ENCODE measurements at regions of chr19 and their contacts with region 1.

Region 1: DNA sequence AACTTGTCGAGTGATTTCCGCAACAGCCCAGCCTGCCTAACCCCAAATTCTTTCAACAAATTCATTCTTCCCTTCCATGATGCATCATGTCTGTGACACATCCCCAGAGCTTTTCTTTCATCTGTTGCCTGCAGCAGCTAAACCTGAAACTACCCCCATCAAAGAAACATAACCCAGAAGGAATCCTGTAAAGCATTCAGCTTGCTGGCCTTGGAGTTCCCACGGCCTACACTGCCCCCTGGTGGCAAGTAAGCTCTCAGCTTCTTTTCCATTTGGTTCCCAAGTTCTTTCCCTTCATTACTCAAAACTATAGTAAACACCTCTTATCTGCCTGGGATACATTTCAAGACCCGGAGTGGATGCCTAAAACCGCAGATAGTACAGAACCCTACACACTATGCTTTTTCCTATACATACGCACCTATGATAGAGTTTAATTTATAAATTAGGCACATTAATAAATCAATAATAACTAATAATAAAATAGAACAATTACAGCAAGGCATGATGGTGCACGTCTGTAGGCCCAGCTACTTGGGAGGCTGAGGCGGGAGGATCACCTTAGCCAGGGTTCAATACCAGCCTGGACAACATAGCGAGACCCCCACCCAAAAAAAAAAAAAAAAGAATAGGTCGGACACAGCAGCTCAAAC is 7.4 kb downstream of the ETHE1 start:
- DNase-seq: peak; percentile 84
- ATAC-seq: peak; percentile 95
- H3K4me3 ChIP-seq: no peak overlapping the region
- H3K27ac ChIP-seq: no peak overlapping the region
- H3K4me1 ChIP-seq: peaks cover 10% of the 10 kb centered on the region
- H3K27me3 ChIP-seq: no peaks in the 10 kb centered on the region
- CTCF ChIP-seq: peak; percentile 93

Region 2: DNA sequence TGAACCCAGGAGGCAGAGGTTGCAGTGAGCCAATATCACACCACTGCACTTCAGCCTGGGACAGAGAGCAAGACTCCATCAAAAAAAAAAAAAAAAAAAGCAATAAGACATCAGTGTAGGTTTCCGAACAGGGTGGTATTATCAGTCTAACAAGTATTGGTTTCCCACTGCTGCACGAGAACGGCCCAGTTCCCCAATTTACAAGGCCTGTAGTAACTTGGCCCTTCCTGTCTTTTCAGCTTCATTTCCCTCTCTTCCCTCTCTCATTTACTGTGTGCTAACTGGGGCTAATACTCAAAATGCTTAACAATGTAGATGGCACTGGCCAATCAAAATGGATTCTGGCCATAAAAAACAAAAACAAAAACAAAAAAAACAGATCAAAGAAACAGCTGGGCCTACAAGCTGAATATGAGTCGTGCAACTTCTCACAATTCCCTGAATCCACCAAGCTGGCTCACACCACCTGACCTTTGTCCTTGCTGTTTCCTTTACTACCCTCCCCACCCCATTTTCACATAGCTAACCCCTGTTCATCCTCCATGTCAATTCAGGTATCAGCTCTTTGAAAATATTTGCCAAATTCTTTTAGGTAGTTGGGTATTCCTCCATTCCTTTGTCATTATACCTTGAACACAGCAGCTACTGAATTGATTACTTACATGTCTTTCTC is 102.5 kb before region 1 on chr19:
- intact Hi-C with region 1: no loop called
- DNase-seq: no peak
- ATAC-seq: peak; percentile 56
- H3K4me3 ChIP-seq: no peak overlapping the region
- H3K27ac ChIP-seq: no peak overlapping the region
- H3K4me1 ChIP-seq: no peaks in the 10 kb centered on the region
- H3K27me3 ChIP-seq: no peaks in the 10 kb centered on the region
- CTCF ChIP-seq: no peak

Region 3: DNA sequence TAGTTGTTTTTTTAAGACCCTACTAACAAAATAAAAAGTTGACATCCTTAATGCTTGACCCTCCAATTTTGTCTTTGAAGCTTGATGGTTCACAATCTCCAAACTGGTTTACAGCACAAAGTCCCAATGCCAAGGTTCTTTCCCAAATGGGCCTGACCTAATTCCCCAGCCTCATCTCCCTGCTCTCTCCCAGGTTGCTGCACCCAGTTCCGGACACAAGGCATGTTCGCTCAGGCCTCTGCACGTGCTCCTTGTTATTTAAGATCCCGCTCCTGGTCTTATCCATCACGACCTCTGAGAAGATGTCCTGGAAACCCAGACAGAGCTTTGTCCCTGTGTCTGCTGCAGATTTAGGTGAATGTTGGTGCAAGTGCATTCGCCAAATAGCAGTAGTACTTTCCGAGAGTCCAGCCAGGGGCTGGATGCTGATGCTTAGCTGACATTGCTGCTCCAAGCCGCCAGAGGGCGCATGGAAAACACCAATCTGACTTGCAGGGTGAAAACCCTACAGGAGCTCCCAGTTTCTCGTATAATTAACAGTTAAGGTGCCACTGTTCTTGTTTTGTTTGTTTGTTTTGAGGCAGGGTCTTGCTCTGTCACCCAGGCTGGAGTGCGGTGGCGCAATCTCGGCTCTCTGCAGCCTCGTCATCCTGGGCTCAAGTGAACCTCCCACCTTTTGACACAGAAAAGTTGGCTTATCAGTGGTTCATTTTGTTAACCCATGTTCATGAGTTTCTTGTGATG is 72.6 kb before region 1 on chr19:
- intact Hi-C with region 1: loop called (anchors 5 kb)
- DNase-seq: peak; percentile 86
- ATAC-seq: peak; percentile 95
- H3K4me3 ChIP-seq: no peak overlapping the region
- H3K27ac ChIP-seq: no peak overlapping the region
- H3K4me1 ChIP-seq: no peaks in the 10 kb centered on the region
- H3K27me3 ChIP-seq: no peaks in the 10 kb centered on the region
- CTCF ChIP-seq: peak; percentile 95

Region 4: GRCh38 chr19:43555185-43555770 is 35.7 kb after region 1 on chr19:
- intact Hi-C with region 1: no loop called
- DNase-seq: no peak
- ATAC-seq: peak; percentile 91
- H3K4me3 ChIP-seq: no peak overlapping the region
- H3K27ac ChIP-seq: no peak overlapping the region
- H3K4me1 ChIP-seq: no peaks in the 10 kb centered on the region
- H3K27me3 ChIP-seq: no peaks in the 10 kb centered on the region
- CTCF ChIP-seq: peak; percentile 69